Right ventricle myocardium inferior (tissue), 1 donor: ENCODE measurements at regions of chr13 and their contacts with region 1.

Region 1: DNA sequence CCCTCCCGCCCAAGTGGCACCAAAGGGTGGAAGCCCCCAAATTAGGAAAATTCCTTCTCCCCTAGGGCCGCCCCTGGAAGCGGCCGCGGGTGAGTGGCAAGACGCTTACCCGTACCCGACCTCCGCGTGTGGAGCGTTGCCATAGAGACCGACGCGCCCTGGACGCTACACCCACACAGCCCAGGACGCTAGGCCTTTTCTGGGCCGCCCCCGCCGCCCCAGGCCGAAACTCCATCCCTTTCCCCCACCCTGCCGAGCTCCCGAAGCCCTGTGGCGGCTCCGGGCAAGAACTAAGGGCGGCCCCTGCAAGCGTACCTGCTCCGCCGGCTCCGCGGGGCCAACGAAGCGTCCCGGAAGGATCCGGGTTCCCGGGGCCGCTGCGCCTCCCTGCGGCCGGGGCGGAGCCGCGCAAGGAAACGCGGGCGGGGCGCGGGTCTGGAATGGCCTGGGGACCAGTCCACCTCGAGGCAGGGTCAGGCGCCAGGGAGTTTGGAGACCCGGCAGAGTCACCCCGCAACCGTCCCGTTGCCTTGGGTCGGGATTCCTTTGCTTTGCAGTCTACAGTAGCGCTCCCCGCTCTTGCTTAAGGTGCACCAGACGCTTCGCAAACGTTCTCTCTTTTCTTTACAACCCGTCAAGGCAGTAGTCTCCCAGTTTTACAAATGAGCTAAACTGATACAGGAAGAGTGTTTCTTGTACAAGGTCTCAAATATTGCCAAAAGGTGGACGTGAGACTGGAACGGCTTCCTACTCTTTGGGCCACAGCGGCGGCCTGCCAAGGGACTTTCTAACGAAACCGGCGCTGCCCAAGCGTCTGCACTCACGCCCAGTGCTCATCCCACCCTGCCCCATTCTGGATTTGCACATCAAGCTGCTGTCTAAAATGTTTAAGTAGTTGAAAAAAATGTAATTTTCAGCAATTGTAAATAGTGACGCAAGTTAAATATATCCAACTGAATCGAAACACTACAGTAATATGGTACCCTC is at the start of gene NEK5:
- DNase-seq: peak; percentile 86
- ATAC-seq: peak; percentile 88
- total RNA-seq, gene NEK5: 0.11 TPM

Region 2: GRCh38 chr13:51814825-51815650 is 314.0 kb before region 1 on chr13:
- intact Hi-C with region 1: loop called (anchors 5 kb)
- DNase-seq: no peak
- ATAC-seq: peak; percentile 61

Region 3: DNA sequence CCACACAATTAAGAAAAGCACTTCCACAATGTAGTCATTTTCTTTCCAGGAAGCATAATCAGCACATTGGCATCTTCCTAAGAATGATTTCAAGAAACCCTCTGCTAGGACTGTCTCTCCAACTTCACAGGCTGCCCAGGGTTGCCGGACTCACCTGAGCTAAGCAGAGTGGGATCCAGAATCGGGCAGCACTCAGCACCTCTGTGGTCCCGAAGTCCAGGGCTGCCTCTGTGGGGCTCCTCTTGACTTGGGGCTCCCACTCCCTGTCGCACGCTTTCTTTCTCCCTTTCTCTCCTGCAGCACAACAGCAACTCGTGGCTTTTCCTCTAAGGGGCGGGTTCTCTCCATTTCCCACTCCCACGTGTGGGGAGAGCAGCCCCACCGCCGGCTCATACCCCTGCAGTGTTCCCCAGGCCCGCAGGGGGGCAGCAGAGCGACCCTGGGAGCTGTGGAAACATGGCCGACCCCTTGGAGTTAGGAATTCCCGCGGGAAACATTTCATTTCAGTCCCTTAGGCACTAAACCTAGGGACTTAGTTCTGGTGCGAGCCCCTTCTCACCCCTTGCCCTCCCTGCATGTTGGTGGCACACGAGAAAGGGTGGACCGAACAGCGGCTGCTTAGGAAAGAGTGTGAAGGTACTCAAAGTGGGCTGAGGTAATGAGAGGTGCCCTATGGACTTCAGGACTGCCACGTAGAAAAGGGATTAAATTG is 284.0 kb before region 1 on chr13 and contains the start of gene TMEM272:
- intact Hi-C with region 1: loop called (anchors 5 kb)
- DNase-seq: peak; percentile 77
- ATAC-seq: peak; percentile 76
- total RNA-seq, gene TMEM272: 0.49 TPM

Region 4: GRCh38 chr13:51895906-51896888 is 232.8 kb before region 1 on chr13:
- intact Hi-C with region 1: loop called (anchors 1 kb)
- DNase-seq: no peak
- ATAC-seq: peak; percentile 84

Region 5: GRCh38 chr13:52001120-52001731 is 127.8 kb before region 1 on chr13:
- intact Hi-C with region 1: loop called (anchors 1 kb)
- DNase-seq: no peak
- ATAC-seq: no peak

Region 6: DNA sequence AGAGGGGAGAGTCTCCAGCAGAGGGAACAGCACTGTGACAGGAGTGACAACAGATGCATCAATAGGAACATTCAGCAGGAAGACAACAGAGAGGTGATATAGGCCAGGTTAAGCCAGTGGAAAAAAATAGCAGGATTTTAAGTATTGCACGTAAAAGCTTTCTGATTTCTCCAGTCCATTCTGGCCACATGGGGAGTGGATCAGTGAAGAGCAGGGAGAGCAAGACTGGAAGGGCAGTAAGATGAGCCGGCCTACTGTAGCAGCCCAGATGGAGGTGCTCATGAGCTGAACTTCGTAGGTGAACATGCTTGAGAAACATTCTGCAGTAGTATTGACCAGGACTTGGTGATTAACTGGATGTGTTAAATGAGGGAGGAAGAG is 102.8 kb before region 1 on chr13:
- intact Hi-C with region 1: no loop called
- DNase-seq: no peak
- ATAC-seq: no peak

Region 7: DNA sequence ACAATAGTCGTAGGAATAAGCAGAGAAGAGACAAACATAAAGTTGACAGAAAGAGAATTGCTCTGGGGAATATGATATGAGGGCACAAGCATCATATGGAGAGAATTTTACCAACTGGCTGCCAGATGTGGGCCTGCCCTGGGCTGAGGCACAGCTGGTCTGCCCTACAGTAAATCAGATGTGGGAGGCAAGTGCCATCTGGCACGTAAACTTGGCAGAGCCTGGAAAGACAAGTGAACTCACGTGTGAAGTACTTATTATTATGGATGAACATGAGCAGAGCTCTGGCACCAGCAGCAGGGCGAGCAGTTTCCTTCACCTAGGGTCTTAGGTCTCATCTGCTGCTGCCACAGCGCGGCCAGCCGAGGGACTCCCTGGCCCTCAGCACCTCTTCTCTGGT is 698.8 kb after region 1 on chr13:
- intact Hi-C with region 1: no loop called
- DNase-seq: no peak
- ATAC-seq: no peak